Activated CD4-positive, alpha-beta memory T cell treated with anti-CD3 and anti-CD28 coated beads for 36 hours (primary cell): ENCODE measurements at regions of chr4 and their contacts with region 1.

Region 1: DNA sequence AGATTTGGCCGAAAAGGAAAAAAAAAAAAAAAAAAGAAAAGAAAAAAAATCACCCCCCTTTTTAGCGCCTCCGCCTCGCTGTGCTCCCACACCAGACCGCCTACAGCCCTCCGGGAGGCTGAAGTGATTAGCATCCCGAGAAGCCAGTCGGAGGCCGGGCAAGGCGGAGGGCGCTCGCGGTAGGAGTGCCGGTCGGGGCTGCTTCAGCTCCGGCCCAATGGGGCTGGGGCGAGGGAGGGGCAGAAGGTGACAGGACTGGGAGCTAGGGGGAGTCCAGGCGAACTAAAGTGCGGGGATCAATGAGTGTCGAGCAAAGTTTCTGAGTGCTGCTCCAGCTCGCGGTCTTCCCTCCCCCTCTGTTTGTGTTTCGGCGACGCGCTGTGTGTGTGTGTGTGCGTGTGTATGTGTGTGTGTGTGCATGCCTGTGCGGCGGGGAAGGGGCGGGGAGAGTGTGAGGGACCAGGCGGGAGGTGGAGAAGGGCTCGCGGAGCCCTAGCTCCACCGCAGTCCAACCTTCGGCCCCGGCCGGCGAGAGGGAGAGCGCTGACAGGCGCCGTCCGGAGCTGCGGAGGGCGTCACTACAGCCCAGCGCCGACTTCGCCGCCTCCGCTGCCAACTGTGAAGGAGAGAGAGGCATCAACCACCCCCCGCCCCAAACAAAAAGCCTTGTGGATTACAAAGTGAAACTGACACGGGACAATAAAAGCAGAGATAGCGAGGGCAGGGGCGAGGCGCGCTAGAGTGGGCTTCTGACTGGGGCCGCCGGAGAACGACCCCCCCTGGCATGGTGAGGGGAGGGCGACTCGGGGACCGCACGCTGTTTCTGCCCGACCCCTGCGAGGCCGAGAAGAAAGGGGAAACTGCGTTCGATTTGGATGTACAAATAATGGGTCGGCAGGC is at the start of gene FAT4:
- DNase-seq: peak; percentile 58
- H3K4me3 Mint-ChIP-seq: peak within 1 kb of the TSS; percentile 70
- H3K27ac Mint-ChIP-seq: no peak within 1 kb of the TSS
- H3K4me1 Mint-ChIP-seq: peaks cover 27% of the 10 kb centered on the region
- H3K27me3 Mint-ChIP-seq: peaks cover 63% of the 10 kb centered on the region
- total RNA-seq, gene FAT4: not detected

Region 2: DNA sequence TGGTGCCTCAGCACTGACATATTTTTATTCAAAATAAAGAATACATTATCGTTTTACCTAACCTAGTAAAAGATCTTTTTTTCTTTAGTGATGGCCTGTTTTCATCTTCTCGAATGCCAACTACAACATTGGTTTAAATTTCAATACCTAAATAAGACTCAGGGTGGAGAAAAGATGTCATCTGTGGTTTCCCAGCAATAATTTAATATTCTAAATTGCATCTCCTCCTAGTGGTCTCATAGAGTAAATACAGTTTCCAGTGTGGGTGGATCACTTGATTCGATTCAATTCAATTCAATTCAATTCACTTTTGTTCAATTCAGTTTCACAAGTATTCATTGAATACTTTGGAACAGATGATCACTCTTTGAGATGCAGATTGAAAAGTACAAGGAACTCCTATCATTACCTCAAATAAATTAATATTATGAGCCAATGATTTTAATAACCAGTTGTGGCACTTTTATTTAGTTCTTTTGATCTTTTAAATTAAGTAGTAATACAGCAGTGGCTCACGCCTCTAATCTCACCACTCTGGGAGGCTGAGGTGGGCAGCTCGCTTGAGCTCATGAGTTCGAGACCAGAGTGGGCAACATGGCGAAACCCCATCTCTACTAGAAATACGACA is 427.0 kb after region 1 on chr4:
- CTCF ChIA-PET with region 1: no interaction called
- POLR2A ChIA-PET with region 1: no interaction called
- intact Hi-C with region 1: loop called (anchors 10 kb)
- DNase-seq: no peak
- H3K4me3 Mint-ChIP-seq: no peak overlapping the region
- H3K27ac Mint-ChIP-seq: no peak overlapping the region
- H3K4me1 Mint-ChIP-seq: no peaks in the 10 kb centered on the region
- H3K27me3 Mint-ChIP-seq: no peaks in the 10 kb centered on the region

Region 3: GRCh38 chr4:126604268-126604867 is 1289.4 kb after region 1 on chr4:
- CTCF ChIA-PET with region 1: no interaction called
- POLR2A ChIA-PET with region 1: no interaction called
- intact Hi-C with region 1: loop called (anchors 2 kb)
- DNase-seq: no peak
- H3K4me3 Mint-ChIP-seq: no peak overlapping the region
- H3K27ac Mint-ChIP-seq: no peak overlapping the region
- H3K4me1 Mint-ChIP-seq: no peaks in the 10 kb centered on the region
- H3K27me3 Mint-ChIP-seq: no peaks in the 10 kb centered on the region

Region 4: GRCh38 chr4:127124920-127125319 is 1810.0 kb after region 1 on chr4:
- CTCF ChIA-PET with region 1: no interaction called
- POLR2A ChIA-PET with region 1: no interaction called
- intact Hi-C with region 1: loop called (anchors 10 kb)
- DNase-seq: no peak
- H3K4me3 Mint-ChIP-seq: no peak overlapping the region
- H3K27ac Mint-ChIP-seq: no peak overlapping the region
- H3K4me1 Mint-ChIP-seq: no peaks in the 10 kb centered on the region
- H3K27me3 Mint-ChIP-seq: no peaks in the 10 kb centered on the region